K562 (cell line): ENCODE measurements at regions of chr1 and their contacts with region 1.

Region 1: DNA sequence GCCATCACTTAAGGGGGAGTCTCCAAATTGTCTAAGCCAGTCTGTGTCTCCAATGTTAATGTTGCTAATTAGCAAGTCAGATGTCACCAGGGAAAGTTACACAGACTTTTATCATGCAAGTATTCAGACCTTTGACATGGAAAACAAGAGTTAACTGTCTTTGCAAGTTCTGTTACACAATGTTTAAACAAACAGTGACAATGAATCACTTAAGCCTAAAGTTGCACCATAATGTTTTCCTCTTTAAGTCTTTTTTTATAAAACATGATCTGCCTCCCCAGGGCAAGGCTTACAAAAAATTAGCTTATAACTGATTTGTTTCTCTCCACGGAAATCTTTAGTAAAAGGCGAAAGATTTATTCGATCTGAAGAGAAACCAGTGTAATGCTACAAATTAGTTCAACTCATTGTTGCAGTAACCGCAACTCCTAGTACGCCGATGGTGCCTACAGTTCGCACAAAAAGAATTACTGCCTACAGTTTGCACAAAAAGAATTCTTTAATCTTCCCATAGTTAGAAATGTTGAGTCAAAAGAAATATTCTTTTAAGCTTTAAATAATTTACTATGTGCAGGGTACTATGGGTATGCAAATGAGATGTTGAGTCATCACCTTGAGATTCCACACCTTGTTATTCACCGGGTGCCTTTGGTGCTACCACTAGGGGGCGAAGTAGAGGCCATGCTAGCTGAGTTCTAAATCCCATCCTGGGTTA is 45.3 kb downstream of the HHAT start:
- DNase-seq: peak; percentile 85 to 88 (median 87)
- ATAC-seq: peak; percentile 92
- H3K4me3 ChIP-seq: no peak overlapping the region
- H3K27ac ChIP-seq: peak overlapping the region; percentile 68
- H3K4me1 ChIP-seq: no peaks in the 10 kb centered on the region; a peak in 1 of 5 replicates
- H3K27me3 ChIP-seq: 0 out of 5 replicates have a peak, but pooled peaks cover 0 to 4% of the 10 kb centered on the region in 2 experiments
- CTCF ChIP-seq: peak; percentile 76 to 90 (median 83)
- EP300 ChIP-seq: no peak
- POLR2A ChIP-seq: peak; percentile 100
- RAD21 ChIP-seq: no peak

Region 2: DNA sequence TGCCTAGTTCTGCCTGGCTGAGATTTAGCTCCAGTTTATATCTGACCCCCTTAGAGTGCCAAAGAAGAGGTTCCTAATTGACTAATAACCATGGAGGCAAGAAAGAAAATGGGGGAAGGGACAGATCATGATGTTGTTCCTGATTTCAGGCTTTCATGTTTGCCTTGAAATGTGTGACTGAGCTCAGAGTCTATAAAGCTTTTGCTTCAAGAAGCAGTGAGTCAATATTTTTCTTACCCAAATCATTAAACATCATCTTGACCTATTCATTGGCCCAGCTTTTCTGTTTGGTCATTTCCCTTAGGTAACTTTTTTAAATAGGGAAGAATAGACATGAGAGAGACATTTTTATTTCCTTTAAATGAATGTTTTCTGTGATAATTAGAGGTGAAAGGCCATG is 10.6 kb after region 1 on chr1:
- CTCF ChIA-PET with region 1: no interaction called
- POLR2A ChIA-PET with region 1: interaction called, 13 read pairs
- in situ Hi-C with region 1: no loop called
- intact Hi-C with region 1: no loop called
- DNase-seq: no peak
- ATAC-seq: no peak
- H3K4me3 ChIP-seq: no peak overlapping the region
- H3K27ac ChIP-seq: no peak overlapping the region
- H3K4me1 ChIP-seq: no peaks in the 10 kb centered on the region
- H3K27me3 ChIP-seq: peaks cover 4 to 6% of the 10 kb centered on the region in 2 experiments; a peak in 4 of 5 replicates
- CTCF ChIP-seq: no peak
- EP300 ChIP-seq: no peak
- POLR2A ChIP-seq: no peak
- RAD21 ChIP-seq: no peak